HepG2 (cell line): ENCODE measurements at regions of chr10 and their contacts with region 1.

Region 1: DNA sequence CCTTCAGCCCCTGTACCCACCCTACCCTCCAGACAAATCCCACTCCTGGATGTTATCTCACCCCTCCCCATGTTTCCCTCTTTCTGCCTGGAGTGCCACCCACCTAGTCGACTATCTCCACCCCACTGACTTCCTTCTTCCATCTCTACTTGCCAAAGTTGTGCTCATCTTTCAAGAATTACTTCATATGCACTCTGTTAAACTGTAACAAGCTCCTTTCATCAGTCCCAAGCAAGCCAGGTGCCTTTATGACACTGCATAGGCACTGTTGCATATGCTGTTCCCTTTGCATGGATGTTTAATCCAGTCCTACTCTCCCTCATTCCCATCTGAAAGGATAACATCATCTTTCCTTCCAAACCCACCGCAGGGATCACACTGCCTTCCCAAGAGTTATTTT is 8.9 kb upstream of the CDK1 start:
- DNase-seq: no peak
- ATAC-seq: no peak
- H3K4me3 ChIP-seq: no peak overlapping the region
- H3K27ac ChIP-seq: no peak overlapping the region
- H3K4me1 ChIP-seq: no peaks in the 10 kb centered on the region
- H3K27me3 ChIP-seq: peaks cover 0 to 11% of the 10 kb centered on the region in 2 experiments; a peak in 2 of 5 replicates
- CTCF ChIP-seq: no peak
- EP300 ChIP-seq: no peak
- POLR2A ChIP-seq: no peak
- RAD21 ChIP-seq: no peak

Region 2: GRCh38 chr10:60444494-60445064 is 324.8 kb before region 1 on chr10:
- CTCF ChIA-PET with region 1: no interaction called
- POLR2A ChIA-PET with region 1: no interaction called
- in situ Hi-C with region 1: no loop called
- intact Hi-C with region 1: loop called (anchors 5 kb)
- DNase-seq: peak; percentile 4
- ATAC-seq: no peak
- H3K4me3 ChIP-seq: no peak overlapping the region
- H3K27ac ChIP-seq: no peak overlapping the region
- H3K4me1 ChIP-seq: no peaks in the 10 kb centered on the region
- H3K27me3 ChIP-seq: no peaks in the 10 kb centered on the region
- CTCF ChIP-seq: peak; percentile 36
- EP300 ChIP-seq: no peak
- POLR2A ChIP-seq: no peak
- RAD21 ChIP-seq: no peak

Region 3: DNA sequence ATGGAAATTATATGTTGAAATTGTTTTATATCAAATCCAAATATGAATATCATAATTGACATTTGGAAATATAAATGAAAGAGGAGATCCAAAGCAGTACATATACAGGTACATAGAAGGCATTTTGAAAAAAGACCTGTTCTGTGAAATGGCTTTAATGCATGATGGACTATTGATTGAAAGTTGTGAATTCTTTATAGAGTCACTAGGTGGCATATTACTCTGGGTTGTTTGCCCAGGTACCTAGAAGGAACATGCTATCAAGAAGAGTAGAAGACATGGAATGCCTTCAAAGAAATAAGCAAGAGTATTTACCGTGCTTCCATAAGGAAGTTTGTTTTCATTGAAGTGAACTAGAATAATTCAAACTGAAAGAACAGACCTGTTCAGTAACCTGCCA is 219.7 kb before region 1 on chr10:
- CTCF ChIA-PET with region 1: interaction called, 3 read pairs
- POLR2A ChIA-PET with region 1: no interaction called
- in situ Hi-C with region 1: no loop called
- intact Hi-C with region 1: loop called (anchors 2 kb)
- DNase-seq: peak; percentile 6
- ATAC-seq: peak; percentile 28; the same call in 1 of the 3 replicates
- H3K4me3 ChIP-seq: no peak overlapping the region
- H3K27ac ChIP-seq: no peak overlapping the region
- H3K4me1 ChIP-seq: no peaks in the 10 kb centered on the region
- H3K27me3 ChIP-seq: no peaks in the 10 kb centered on the region
- CTCF ChIP-seq: peak; percentile 53
- EP300 ChIP-seq: no peak
- POLR2A ChIP-seq: no peak
- RAD21 ChIP-seq: no peak

Region 4: DNA sequence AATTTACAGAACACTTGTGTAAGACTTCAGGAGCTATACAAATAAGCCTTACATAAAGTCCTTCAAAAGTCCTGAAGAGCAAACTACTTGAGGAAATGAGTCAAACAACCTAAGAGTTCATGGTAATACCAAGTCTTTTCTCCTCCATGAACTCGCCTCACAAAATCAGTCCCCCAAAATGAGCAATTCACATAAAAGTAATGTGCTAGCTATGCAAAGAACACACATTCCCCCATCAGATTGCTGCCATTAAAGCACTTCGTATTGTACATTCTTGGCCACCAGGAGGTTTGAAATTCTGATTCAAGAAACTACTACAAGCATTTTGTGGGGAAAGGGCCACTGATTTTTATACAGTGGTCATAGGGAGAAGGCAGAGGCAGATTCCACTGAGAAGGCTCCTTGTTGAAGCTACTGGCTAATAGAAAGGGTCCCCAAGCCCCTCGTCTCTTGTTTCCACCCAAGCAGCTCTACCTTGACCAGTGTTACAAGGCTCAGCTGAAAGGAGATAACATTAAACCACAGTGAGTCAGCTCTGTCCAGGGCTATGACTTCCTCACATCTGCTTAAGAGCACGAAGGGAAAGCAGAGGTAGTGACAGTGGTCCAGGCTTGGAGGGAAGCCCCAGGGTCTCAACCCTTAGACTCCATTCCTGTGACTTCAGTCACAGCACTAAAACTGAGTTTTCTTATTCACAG is 106.3 kb before region 1 on chr10:
- CTCF ChIA-PET with region 1: no interaction called
- POLR2A ChIA-PET with region 1: no interaction called
- in situ Hi-C with region 1: no loop called
- intact Hi-C with region 1: loop called (anchors 5 kb)
- DNase-seq: no peak
- ATAC-seq: no peak
- H3K4me3 ChIP-seq: no peak overlapping the region
- H3K27ac ChIP-seq: no peak overlapping the region
- H3K4me1 ChIP-seq: peaks cover 5% of the 10 kb centered on the region; the same call in 1 of the 2 replicates
- H3K27me3 ChIP-seq: no peaks in the 10 kb centered on the region
- CTCF ChIP-seq: no peak
- EP300 ChIP-seq: no peak
- POLR2A ChIP-seq: no peak
- RAD21 ChIP-seq: no peak

Region 5: DNA sequence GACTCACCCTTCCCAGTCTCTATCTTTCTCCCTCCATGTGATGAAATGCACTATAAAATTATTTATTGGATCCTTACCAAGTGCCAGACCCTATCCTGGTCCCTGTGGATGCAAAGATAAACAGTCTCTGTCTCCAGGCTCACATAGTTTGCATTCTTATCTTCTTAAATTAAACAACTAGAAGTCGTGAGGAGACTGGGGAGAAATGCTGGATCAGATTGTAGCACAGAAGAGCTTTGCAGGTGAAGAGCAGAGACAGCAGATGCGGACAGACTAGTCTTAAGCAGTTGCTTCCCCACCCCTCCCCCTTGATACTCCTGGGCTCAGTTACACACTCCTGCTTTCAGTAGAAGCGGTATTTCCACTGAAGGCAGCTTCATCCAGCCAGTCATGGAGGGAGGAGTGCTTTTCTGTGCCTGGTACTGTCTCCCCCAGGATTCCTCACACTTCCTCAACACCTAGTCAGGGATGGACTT is 11.9 kb before region 1 on chr10:
- CTCF ChIA-PET with region 1: no interaction called
- POLR2A ChIA-PET with region 1: no interaction called
- in situ Hi-C with region 1: no loop called
- intact Hi-C with region 1: no loop called
- DNase-seq: no peak
- ATAC-seq: no peak
- H3K4me3 ChIP-seq: no peak overlapping the region
- H3K27ac ChIP-seq: no peak overlapping the region
- H3K4me1 ChIP-seq: no peaks in the 10 kb centered on the region
- H3K27me3 ChIP-seq: 0 out of 5 replicates have a peak, but pooled peaks cover 0 to 4% of the 10 kb centered on the region in 2 experiments
- CTCF ChIP-seq: no peak
- EP300 ChIP-seq: no peak
- POLR2A ChIP-seq: no peak
- RAD21 ChIP-seq: no peak